HepG2 (cell line): ENCODE measurements at regions of chr17 and their contacts with region 1.

Region 1: GRCh38 chr17:78112518-78113226 is 15.9 kb downstream of the TMC6 start:
- DNase-seq: peak; percentile 52
- ATAC-seq: peak; percentile 74
- H3K4me3 ChIP-seq: no peak overlapping the region
- H3K27ac ChIP-seq: no peak overlapping the region
- H3K4me1 ChIP-seq: peaks cover 27% of the 10 kb centered on the region
- H3K27me3 ChIP-seq: no peaks in the 10 kb centered on the region
- CTCF ChIP-seq: peak; percentile 99
- EP300 ChIP-seq: no peak
- POLR2A ChIP-seq: 0 out of 4 replicates have a peak, but pooled peaks of 1 of the 2 experiments have one; percentile 12
- RAD21 ChIP-seq: peak; percentile 98

Region 2: DNA sequence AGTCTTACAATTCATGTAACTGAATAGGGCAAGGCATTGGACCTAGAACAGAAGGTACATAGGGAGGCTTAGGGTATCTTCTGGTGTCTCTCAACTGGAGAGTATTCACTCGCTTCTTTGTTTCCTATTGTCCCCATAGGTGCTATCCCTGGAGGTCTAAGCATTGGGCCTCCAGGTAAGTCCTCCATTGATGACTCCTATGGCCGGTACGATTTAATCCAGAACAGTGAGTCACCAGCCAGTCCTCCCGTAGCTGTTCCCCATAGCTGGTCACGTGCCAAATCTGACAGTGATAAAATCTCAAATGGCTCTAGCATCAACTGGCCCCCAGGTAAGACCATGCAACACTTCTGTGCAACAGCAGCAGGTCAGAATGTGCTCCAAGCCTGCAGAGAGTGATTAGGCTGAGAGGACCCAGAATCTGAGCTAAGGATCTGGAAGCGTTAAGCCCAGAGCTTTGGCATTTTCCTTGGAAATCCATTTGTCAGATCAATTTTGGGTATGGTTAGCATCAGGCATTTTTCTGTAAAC is 19.8 kb before region 1 on chr17:
- CTCF ChIA-PET with region 1: no interaction called
- POLR2A ChIA-PET with region 1: no interaction called
- in situ Hi-C with region 1: no loop called
- intact Hi-C with region 1: no loop called
- DNase-seq: no peak
- ATAC-seq: no peak
- H3K4me3 ChIP-seq: no peak overlapping the region
- H3K27ac ChIP-seq: no peak overlapping the region
- H3K4me1 ChIP-seq: no peaks in the 10 kb centered on the region
- H3K27me3 ChIP-seq: no peaks in the 10 kb centered on the region
- CTCF ChIP-seq: no peak
- EP300 ChIP-seq: no peak
- POLR2A ChIP-seq: no peak
- RAD21 ChIP-seq: no peak

Region 3: GRCh38 chr17:78133971-78134898 is 21.6 kb after region 1 on chr17:
- CTCF ChIA-PET with region 1: interaction called, 17 read pairs
- POLR2A ChIA-PET with region 1: interaction called, 4 read pairs
- in situ Hi-C with region 1: no loop called
- intact Hi-C with region 1: loop called (anchors 1 kb)
- DNase-seq: peak; percentile 83
- ATAC-seq: peak; percentile 44
- H3K4me3 ChIP-seq: peak overlapping the region in 1 of 3 experiments; percentile 23; a peak in 1 of 6 replicates
- H3K27ac ChIP-seq: no peak overlapping the region
- H3K4me1 ChIP-seq: peaks cover 93% of the 10 kb centered on the region
- H3K27me3 ChIP-seq: no peaks in the 10 kb centered on the region
- CTCF ChIP-seq: peak; percentile 94
- EP300 ChIP-seq: no peak
- POLR2A ChIP-seq: no peak
- RAD21 ChIP-seq: peak; percentile 90

Region 4: GRCh38 chr17:78166416-78166815 is 53.7 kb after region 1 on chr17:
- CTCF ChIA-PET with region 1: no interaction called
- POLR2A ChIA-PET with region 1: no interaction called
- in situ Hi-C with region 1: no loop called
- intact Hi-C with region 1: no loop called
- DNase-seq: no peak
- ATAC-seq: no peak
- H3K4me3 ChIP-seq: peak overlapping the region in 1 of 3 experiments; percentile 5; a peak in 1 of 6 replicates
- H3K27ac ChIP-seq: no peak overlapping the region
- H3K4me1 ChIP-seq: peaks cover 65% of the 10 kb centered on the region
- H3K27me3 ChIP-seq: peaks cover 0 to 2% of the 10 kb centered on the region in 2 experiments; a peak in 1 of 5 replicates
- CTCF ChIP-seq: no peak; the same call in 1 of the 2 replicates
- EP300 ChIP-seq: no peak
- POLR2A ChIP-seq: no peak
- RAD21 ChIP-seq: no peak

Region 5: DNA sequence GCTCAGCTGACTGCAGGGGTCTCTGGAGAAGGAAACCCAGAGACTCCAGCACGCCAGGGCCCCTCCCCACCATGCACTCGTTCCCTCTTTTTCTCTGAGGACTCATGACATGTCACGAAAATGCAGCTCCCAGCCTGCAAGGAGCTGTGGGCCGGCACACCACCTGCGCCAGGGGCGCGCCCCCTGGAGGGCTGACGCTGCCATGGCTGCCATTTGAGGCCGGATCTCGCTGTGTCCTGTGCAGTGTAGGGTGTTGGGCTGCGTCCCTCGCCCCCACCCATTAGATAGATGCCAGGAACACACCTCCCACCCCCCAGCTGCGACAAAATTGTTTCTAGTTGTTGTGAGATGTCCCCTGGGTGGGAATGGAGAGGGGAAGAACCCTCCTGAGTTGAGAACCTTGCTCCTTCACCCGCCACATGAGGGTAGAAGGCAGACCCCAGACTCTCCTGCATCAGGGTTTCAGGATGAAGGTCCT is 63.9 kb after region 1 on chr17:
- CTCF ChIA-PET with region 1: interaction called, 18 read pairs
- POLR2A ChIA-PET with region 1: no interaction called
- in situ Hi-C with region 1: no loop called
- intact Hi-C with region 1: no loop called
- DNase-seq: no peak
- ATAC-seq: peak; percentile 58
- H3K4me3 ChIP-seq: no peak overlapping the region
- H3K27ac ChIP-seq: no peak overlapping the region
- H3K4me1 ChIP-seq: peaks cover 24% of the 10 kb centered on the region
- H3K27me3 ChIP-seq: no peaks in the 10 kb centered on the region
- CTCF ChIP-seq: peak; percentile 85
- EP300 ChIP-seq: no peak
- POLR2A ChIP-seq: 0 out of 4 replicates have a peak, but pooled peaks of 1 of the 2 experiments have one; percentile 21
- RAD21 ChIP-seq: peak; percentile 67